Heart left ventricle (tissue), 16 donors: ENCODE measurements at regions of chr6 and their contacts with region 1.

Region 1: GRCh38 chr6:125512621-125513020 is 210.9 kb upstream of the HDDC2 start:
- DNase-seq: no peak
- ATAC-seq: no peak
- H3K4me3 ChIP-seq: no peak overlapping the region
- H3K27ac ChIP-seq: no peak overlapping the region
- H3K4me1 ChIP-seq: no peaks in the 10 kb centered on the region
- H3K27me3 ChIP-seq: no peaks in the 10 kb centered on the region
- CTCF ChIP-seq: peak in 2 of 12 donors; percentile 8 to 11
- POLR2A ChIP-seq: no peak

Region 2: GRCh38 chr6:125310994-125311649 is 201.5 kb before region 1 on chr6:
- intact Hi-C with region 1: no loop called
- DNase-seq: peak in 2 of 5 donors; percentile 22 to 26
- ATAC-seq: peak; percentile 72 to 89 (median 86)
- H3K4me3 ChIP-seq: no peak overlapping the region
- H3K27ac ChIP-seq: no peak overlapping the region
- H3K4me1 ChIP-seq: peaks cover 0 to 6% (median 1%) of the 10 kb centered on the region in 12 donors
- H3K27me3 ChIP-seq: peaks cover 0 to 3% (median 0%) of the 10 kb centered on the region in 9 donors
- CTCF ChIP-seq: peak; percentile 75 to 91 (median 82)
- POLR2A ChIP-seq: no peak

Region 3: DNA sequence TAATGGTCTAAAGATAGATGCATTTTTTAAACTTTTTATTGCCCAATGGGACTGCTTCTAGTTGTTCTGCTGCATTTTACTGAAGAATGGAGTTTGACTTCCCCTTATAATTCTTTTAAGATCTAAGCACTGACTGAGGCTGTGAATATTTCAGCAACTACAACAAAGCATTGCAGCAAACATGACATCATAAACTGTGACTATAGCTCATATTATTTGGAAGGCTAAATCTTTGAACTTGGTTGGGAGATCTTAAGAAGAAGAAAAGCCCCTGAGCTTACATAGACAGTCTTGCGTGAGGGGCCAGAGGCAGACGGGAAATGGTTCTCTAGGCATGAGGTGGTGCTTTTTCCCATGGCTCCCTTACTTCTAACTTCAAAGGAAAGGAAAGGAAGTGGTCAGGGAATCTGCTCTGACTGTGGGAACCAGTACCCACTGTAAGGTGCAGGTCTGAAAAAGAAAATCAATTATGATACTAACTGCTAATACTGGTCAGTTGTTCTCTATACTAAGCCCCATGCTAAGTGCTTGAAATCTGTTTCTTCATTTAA is 251.6 kb after region 1 on chr6:
- intact Hi-C with region 1: loop called in 1 of 10 experiments (anchors 10 kb)
- DNase-seq: no peak
- ATAC-seq: no peak
- H3K4me3 ChIP-seq: no peak overlapping the region
- H3K27ac ChIP-seq: peak overlapping the region in 4 of 12 donors; percentile 1 to 26 (median 16)
- H3K4me1 ChIP-seq: peaks cover 0 to 49% (median 4%) of the 10 kb centered on the region in 12 donors
- H3K27me3 ChIP-seq: peaks cover 0 to 7% (median 0%) of the 10 kb centered on the region in 9 donors
- CTCF ChIP-seq: no peak
- POLR2A ChIP-seq: no peak